ENCODE measurements at regions of chr1 and their contacts with region 1.

Region 1: GRCh38 chr1:42657971-42658879 is at the start of gene PPIH:
- H3K4me3 Mint-ChIP-seq: peak within 1 kb of the TSS; percentile 98
- H3K27ac Mint-ChIP-seq: peak within 1 kb of the TSS; percentile 89
- H3K4me1 Mint-ChIP-seq: peaks cover 19% of the 10 kb centered on the region
- H3K27me3 Mint-ChIP-seq: no peaks in the 10 kb centered on the region

Region 2: GRCh38 chr1:42462828-42463763 is 195.1 kb before region 1 on chr1 and contains the start of gene CCDC30:
- intact Hi-C with region 1: loop called (anchors 10 kb)
- H3K4me3 Mint-ChIP-seq: peak within 1 kb of the TSS; percentile 84
- H3K27ac Mint-ChIP-seq: peak within 1 kb of the TSS; percentile 82
- H3K4me1 Mint-ChIP-seq: peaks cover 34% of the 10 kb centered on the region
- H3K27me3 Mint-ChIP-seq: peaks cover 2% of the 10 kb centered on the region

Region 3: GRCh38 chr1:43660355-43660754 is 1002.1 kb after region 1 on chr1:
- intact Hi-C with region 1: no loop called
- H3K4me3 Mint-ChIP-seq: no peak overlapping the region
- H3K27ac Mint-ChIP-seq: no peak overlapping the region
- H3K4me1 Mint-ChIP-seq: no peaks in the 10 kb centered on the region
- H3K27me3 Mint-ChIP-seq: no peaks in the 10 kb centered on the region